Activated CD4-positive, alpha-beta T cell treated with anti-CD3 and anti-CD28 coated beads, Interleukin-2, amount 10 ng/mL, durations not matched to agents 24 days and 14 days (primary cell): ENCODE measurements at regions of chr20 and their contacts with region 1.

Region 1: DNA sequence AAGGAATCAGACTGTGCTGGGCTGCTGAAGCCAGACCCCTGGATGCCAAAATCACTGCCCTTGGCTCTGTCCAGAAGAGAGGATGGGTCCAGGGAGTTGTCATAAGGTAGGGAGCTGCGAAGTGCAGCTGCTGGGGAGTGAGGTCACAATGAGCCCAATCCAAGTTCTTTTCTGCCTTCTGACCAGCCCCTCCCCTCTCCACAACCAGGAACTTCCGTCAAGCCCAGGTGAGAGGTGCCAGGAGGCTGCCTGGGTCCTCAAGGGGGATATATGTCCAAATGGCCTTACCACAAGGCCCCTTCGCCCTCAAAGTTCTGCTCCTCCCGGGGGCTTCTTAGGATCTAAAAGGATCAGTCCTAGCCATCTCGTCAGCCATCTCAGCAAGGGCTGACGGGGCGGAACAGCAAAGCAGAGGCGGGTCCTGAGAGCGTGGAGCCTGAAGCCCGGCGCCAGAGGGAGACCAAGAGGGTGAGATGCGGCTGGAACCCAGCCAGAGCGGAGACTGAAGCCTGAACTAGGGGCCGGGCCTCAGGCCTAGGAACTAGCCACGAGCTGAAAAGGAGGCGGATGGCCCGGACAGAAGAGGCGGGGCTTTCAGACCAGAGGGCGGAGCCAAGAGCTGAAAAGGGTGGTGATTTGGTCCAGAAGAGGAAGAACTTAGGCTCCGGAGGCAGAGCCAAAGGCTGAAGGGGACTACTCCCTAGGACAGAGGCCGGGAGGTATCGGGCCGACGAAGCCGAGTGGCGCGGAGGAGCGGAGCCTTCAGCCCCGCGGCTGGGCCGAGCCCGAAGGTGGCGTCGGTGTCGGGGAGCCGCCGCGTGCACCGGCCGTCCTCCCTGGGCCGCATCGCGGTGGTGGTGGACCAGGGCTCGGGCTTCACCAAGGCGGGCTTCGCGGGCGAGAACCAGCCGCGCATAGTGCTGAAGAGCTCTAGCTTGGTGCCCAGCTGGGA is at the start of gene ACTL10:
- DNase-seq: peak; percentile 96
- H3K4me3 Mint-ChIP-seq: peak within 1 kb of the TSS; percentile 96
- H3K27ac Mint-ChIP-seq: peak within 1 kb of the TSS; percentile 98
- H3K4me1 Mint-ChIP-seq: peaks cover 36% of the 10 kb centered on the region
- H3K27me3 Mint-ChIP-seq: no peaks in the 10 kb centered on the region
- total RNA-seq, gene ACTL10: 3.7 TPM in 2 replicates

Region 2: DNA sequence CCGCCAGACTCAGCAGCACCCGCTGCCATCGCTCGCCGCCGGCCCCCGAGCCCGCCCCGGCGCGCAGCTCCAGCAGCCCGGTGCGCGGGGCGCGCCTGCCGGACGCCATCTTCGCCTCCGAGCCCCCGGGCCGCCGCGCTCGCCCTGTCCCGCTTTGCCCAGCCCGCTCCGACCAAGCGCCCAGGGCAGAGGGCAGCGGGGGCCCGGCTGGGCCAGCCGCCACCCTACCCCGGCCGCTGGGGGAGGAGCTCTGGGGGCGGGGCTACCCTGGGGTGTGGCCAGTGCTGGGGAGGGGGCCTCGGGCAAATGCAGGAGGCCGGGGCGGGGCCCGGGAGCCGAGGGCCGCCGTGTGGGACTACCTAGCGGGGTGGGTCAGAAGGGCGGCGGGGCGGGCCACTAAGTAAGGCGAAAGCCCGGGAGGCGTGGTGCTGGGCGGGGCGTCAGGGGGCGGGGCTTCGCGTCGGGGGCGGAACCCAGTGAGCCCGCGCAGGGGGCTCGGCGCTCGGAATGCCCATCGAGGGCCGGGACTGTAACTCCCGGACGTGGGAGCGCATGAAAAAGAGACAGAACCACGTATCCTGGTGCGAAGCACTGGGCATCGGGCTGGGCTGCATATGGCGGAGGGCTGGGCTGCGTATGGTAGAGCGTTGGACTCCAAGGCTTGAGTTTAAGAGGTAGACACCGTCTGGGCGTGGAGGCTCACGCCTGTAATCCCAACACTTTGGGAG is 222.9 kb before region 1 on chr20 and contains the start of gene SNTA1:
- intact Hi-C with region 1: loop called (anchors 5 kb)
- DNase-seq: peak; percentile 96
- H3K4me3 Mint-ChIP-seq: peak within 1 kb of the TSS; percentile 91
- H3K27ac Mint-ChIP-seq: peak within 1 kb of the TSS; percentile 72
- H3K4me1 Mint-ChIP-seq: peaks cover 16% of the 10 kb centered on the region
- H3K27me3 Mint-ChIP-seq: peaks cover 13% of the 10 kb centered on the region
- total RNA-seq, gene SNTA1: 0.91 and 1.0 TPM in 2 replicates

Region 3: GRCh38 chr20:33460711-33461110 is 205.9 kb before region 1 on chr20:
- intact Hi-C with region 1: loop called (anchors 1 kb)
- DNase-seq: no peak
- H3K4me3 Mint-ChIP-seq: no peak overlapping the region
- H3K27ac Mint-ChIP-seq: no peak overlapping the region
- H3K4me1 Mint-ChIP-seq: peaks cover 3% of the 10 kb centered on the region
- H3K27me3 Mint-ChIP-seq: no peaks in the 10 kb centered on the region

Region 4: GRCh38 chr20:33489495-33490022 is 177.0 kb before region 1 on chr20:
- intact Hi-C with region 1: loop called (anchors 1 kb)
- DNase-seq: peak; percentile 100
- H3K4me3 Mint-ChIP-seq: peak overlapping the region; percentile 87
- H3K27ac Mint-ChIP-seq: peak overlapping the region; percentile 92
- H3K4me1 Mint-ChIP-seq: peaks cover 8% of the 10 kb centered on the region
- H3K27me3 Mint-ChIP-seq: no peaks in the 10 kb centered on the region

Region 5: GRCh38 chr20:33606118-33606771 is 60.3 kb before region 1 on chr20:
- intact Hi-C with region 1: no loop called
- DNase-seq: no peak
- H3K4me3 Mint-ChIP-seq: no peak overlapping the region
- H3K27ac Mint-ChIP-seq: no peak overlapping the region
- H3K4me1 Mint-ChIP-seq: peaks cover 18% of the 10 kb centered on the region
- H3K27me3 Mint-ChIP-seq: no peaks in the 10 kb centered on the region

Region 6: DNA sequence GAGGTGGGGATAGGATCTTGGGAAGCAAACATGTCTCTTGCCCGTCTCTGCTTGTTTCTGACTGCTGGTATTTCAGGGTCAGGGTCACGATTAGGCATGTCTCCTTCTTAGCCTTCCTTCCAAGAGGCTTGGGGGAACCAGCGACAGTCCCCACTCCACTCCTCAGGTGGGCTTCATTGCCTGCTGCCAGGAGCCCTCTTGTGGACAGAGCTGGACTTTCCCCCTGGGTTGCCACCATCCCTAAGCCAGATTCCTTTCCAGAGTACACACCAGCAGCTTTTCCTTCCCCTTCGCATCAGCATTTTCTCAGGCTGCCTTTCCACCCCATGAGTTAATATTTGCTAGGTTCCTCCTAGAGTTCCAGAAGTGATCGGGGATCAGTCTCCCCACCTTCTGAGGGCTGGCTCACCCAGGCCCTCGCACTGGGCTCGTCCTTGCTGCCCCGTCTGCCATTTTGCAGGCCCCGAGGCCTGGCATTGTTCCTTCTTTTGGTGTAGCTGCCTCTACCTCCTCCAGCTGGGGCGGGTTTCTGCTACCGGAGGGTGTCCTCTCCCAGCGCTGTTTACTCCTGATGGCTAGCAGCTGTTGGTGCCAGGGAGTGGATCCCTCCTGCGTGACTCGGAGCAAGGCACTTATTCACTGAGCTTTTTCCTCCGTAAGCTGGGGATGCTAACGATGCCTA is 13.2 kb before region 1 on chr20:
- intact Hi-C with region 1: loop called (anchors 1 kb)
- DNase-seq: peak; percentile 79
- H3K4me3 Mint-ChIP-seq: no peak overlapping the region
- H3K27ac Mint-ChIP-seq: peak overlapping the region; percentile 45
- H3K4me1 Mint-ChIP-seq: peaks cover 16% of the 10 kb centered on the region
- H3K27me3 Mint-ChIP-seq: no peaks in the 10 kb centered on the region

Region 7: DNA sequence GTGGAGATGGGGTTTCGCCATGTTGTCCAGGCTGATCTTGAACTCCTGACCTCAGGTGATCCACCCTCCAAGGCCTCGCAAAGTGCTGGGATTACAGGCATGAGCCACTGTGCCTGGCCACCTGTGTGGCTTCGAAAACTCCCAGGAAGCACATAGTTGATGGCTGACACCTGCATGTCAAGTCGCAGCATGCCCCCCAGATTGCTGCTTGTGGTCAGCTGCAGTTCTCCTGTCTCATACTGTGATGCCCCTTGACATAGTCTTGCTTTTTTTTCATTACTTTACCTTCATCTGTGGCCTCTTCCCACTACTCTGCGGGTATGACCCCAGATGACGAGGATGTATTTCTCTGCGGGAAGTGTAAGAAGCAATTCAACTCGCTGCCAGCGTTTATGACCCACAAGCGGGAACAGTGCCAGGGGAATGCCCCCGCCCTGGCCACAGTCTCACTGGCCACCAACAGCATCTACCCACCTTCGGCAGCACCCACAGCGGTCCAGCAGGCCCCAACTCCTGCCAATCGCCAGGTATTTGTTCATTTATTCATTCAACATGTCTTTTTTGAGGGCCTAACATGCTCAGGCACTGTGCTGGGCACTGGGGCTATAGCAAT is 78.3 kb after region 1 on chr20:
- intact Hi-C with region 1: no loop called
- DNase-seq: no peak
- H3K4me3 Mint-ChIP-seq: no peak overlapping the region
- H3K27ac Mint-ChIP-seq: no peak overlapping the region
- H3K4me1 Mint-ChIP-seq: peaks cover 2% of the 10 kb centered on the region
- H3K27me3 Mint-ChIP-seq: no peaks in the 10 kb centered on the region